MCF 10A (cell line): ENCODE measurements at regions of chr1 and their contacts with region 1.

Region 1: GRCh38 chr1:14733048-14733778 is 134.7 kb downstream of the KAZN start:
- DNase-seq: peak; percentile 93
- H3K4me3 Mint-ChIP-seq: peak overlapping the region; percentile 60
- H3K27ac Mint-ChIP-seq: peak overlapping the region; percentile 98
- H3K4me1 Mint-ChIP-seq: peaks cover 33% of the 10 kb centered on the region
- H3K27me3 Mint-ChIP-seq: no peaks in the 10 kb centered on the region
- CTCF ChIP-seq: no peak

Region 2: DNA sequence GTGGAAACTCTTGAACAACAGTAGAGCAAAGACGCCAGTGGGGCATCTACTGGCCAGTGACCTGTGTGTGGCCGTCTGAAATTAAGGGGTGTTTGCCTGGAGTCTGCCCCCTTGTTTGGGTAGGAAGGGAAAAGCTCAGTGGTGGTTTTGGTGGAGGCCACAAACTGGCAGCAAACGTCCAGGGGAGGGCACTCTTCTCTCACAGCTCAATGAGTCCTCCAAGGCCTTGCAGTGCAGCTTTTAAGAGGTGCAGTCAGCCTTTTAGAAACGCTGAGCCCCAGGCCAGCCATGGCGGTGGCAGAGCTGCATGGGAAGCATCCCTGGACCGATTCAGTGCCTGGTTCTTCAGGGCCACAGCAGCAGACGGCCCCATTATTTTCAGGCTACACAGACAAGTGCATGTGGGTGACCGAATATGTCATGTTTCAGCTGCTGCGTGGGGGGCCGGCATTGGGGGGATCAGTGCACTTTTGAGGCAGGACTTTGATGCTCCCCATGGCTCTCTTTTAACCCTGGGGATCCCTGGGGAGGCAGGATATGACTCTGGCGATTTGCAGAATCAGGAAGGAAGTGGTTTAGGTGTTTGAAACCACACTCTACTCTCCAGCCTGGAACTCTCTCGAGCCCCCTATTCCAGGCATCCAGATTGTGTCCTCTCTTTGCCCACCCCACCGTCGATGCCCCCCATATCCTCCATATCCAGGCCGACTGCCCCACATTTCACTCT is 619.2 kb before region 1 on chr1:
- CTCF ChIA-PET with region 1: interaction called, 7 read pairs
- POLR2A ChIA-PET with region 1: no interaction called
- intact Hi-C with region 1: loop called (anchors 2 kb)
- DNase-seq: peak; percentile 65
- H3K4me3 Mint-ChIP-seq: no peak overlapping the region
- H3K27ac Mint-ChIP-seq: no peak overlapping the region
- H3K4me1 Mint-ChIP-seq: peaks cover 43% of the 10 kb centered on the region
- H3K27me3 Mint-ChIP-seq: no peaks in the 10 kb centered on the region
- CTCF ChIP-seq: peak; percentile 82

Region 3: DNA sequence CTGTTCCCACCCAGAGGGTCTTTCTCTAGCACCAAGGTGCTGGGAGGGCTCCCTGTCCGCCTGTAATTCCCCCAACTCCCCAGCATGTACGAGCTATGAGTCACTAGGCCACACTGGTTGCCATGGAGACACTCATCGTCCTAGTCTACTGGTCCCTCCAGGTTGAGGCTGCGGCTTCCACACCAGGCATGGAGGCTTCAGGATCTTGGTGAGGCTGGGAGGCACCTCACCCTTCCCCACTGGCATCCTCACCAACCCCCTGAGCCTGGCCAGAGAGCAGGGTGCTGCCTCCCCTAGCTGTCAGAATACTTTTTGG is 210.3 kb before region 1 on chr1:
- CTCF ChIA-PET with region 1: interaction called, 4 read pairs
- POLR2A ChIA-PET with region 1: interaction called, 22 read pairs
- intact Hi-C with region 1: no loop called
- DNase-seq: peak; percentile 77
- H3K4me3 Mint-ChIP-seq: peak overlapping the region; percentile 53
- H3K27ac Mint-ChIP-seq: peak overlapping the region; percentile 97
- H3K4me1 Mint-ChIP-seq: peaks cover 57% of the 10 kb centered on the region
- H3K27me3 Mint-ChIP-seq: no peaks in the 10 kb centered on the region
- CTCF ChIP-seq: no peak

Region 4: DNA sequence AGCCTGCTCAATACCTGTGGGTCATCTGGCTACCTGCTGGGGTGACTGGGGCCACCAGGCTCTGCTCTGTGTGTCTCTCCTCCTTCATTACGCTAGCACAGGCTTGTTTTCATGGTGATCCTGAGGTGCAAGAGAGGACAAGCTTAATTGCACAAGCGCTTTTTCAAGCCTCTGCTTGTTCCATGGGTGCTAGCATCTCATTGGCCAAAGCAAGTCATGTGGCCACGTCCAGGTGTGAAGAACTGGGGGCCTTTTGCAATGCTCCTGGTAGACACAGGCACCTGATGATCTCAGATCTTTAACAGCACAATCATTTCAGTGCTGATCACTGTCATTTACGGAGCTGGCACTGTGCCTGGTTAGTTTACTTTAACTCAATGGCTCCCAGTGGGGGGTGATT is 20.1 kb before region 1 on chr1:
- CTCF ChIA-PET with region 1: interaction called, 3 read pairs
- POLR2A ChIA-PET with region 1: interaction called, 10 read pairs
- intact Hi-C with region 1: no loop called
- DNase-seq: peak; percentile 88
- H3K4me3 Mint-ChIP-seq: no peak overlapping the region
- H3K27ac Mint-ChIP-seq: no peak overlapping the region
- H3K4me1 Mint-ChIP-seq: peaks cover 9% of the 10 kb centered on the region
- H3K27me3 Mint-ChIP-seq: no peaks in the 10 kb centered on the region
- CTCF ChIP-seq: no peak

Region 5: GRCh38 chr1:14765773-14766172 is 32.6 kb after region 1 on chr1:
- CTCF ChIA-PET with region 1: interaction called, 4 read pairs
- POLR2A ChIA-PET with region 1: interaction called, 11 read pairs
- intact Hi-C with region 1: loop called (anchors 5 kb)
- DNase-seq: peak; percentile 70
- H3K4me3 Mint-ChIP-seq: no peak overlapping the region
- H3K27ac Mint-ChIP-seq: peak overlapping the region; percentile 55
- H3K4me1 Mint-ChIP-seq: peaks cover 25% of the 10 kb centered on the region
- H3K27me3 Mint-ChIP-seq: no peaks in the 10 kb centered on the region
- CTCF ChIP-seq: no peak

Region 6: DNA sequence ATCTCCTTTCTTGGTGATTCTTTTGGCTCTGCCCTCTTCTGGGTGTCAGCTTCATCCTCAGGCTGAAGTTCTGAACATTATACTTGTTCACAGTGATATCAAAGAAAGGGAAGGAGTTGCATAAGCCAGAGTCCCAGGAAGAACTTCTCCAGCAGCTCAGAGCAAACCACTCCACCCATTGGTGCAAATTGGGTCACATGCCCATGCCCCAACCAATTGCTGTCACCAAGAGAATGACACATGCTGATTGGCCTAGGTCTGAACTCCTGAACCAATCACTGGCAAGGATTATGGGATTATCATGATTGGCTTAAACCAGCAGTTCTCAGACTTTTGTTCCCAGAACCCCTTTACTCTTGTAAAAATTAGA is 163.9 kb after region 1 on chr1:
- CTCF ChIA-PET with region 1: no interaction called
- POLR2A ChIA-PET with region 1: no interaction called
- intact Hi-C with region 1: no loop called
- DNase-seq: no peak
- H3K4me3 Mint-ChIP-seq: no peak overlapping the region
- H3K27ac Mint-ChIP-seq: no peak overlapping the region
- H3K4me1 Mint-ChIP-seq: peaks cover 14% of the 10 kb centered on the region
- H3K27me3 Mint-ChIP-seq: no peaks in the 10 kb centered on the region
- CTCF ChIP-seq: no peak

Region 7: DNA sequence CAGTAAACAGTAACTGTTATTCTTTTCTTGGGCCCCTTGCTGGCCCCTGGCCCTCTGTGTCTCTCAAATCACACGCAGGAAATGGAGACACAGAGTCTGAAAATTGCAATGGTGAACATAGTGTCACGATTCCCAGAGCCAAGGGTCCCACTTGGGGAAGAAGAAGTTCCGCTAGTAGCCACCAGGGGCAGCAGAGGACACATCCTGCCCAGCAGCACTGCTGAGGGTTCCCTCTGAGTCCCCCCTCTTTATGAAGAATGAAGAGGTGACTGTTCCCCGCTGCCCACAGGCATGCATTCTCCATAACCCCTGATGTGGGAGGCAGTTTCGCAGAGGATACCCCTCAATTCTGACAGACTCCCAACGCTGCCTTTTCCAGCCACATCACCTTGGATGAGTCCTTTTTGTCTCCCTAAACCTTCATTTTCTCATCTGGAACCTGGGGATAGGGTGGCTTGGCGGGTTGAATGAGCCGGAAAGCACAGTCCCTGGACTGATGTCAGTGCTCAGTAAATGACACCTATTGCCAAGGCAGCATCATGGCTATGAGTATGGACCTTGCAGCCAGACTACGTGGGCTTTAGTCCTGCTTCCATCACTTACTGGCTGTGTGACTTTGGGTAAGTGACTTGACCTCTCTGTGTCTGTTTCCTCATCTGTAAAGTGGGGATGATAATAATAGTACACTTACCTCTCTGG is 182.3 kb after region 1 on chr1:
- CTCF ChIA-PET with region 1: no interaction called
- POLR2A ChIA-PET with region 1: interaction called, 3 read pairs
- intact Hi-C with region 1: loop called (anchors 10 kb)
- DNase-seq: peak; percentile 59
- H3K4me3 Mint-ChIP-seq: no peak overlapping the region
- H3K27ac Mint-ChIP-seq: no peak overlapping the region
- H3K4me1 Mint-ChIP-seq: peaks cover 11% of the 10 kb centered on the region
- H3K27me3 Mint-ChIP-seq: no peaks in the 10 kb centered on the region
- CTCF ChIP-seq: peak; percentile 89